GM12878 (cell line): ENCODE measurements at regions of chr14 and their contacts with region 1.

Region 1: GRCh38 chr14:95185033-95185766 is 27.9 kb upstream of the DICER1 start:
- DNase-seq: no peak
- ATAC-seq: no peak
- H3K4me3 ChIP-seq: no peak overlapping the region
- H3K27ac ChIP-seq: no peak overlapping the region
- H3K4me1 ChIP-seq: no peaks in the 10 kb centered on the region
- H3K27me3 ChIP-seq: no peaks in the 10 kb centered on the region
- CTCF ChIP-seq: no peak
- EP300 ChIP-seq: no peak
- POLR2A ChIP-seq: no peak
- RAD21 ChIP-seq: no peak

Region 2: GRCh38 chr14:95157327-95158189 is 27.6 kb before region 1 on chr14 and contains the start of gene DICER1:
- CTCF ChIA-PET with region 1: interaction called, 5 read pairs
- POLR2A ChIA-PET with region 1: interaction called, 5 read pairs
- RAD21 ChIA-PET with region 1: interaction called, 7 read pairs
- SMC1A ChIA-PET with region 1: interaction called, 16 read pairs
- in situ Hi-C with region 1: no loop called
- intact Hi-C with region 1: no loop called
- DNase-seq: peak; percentile 44
- ATAC-seq: peak; percentile 85
- H3K4me3 ChIP-seq: peak within 1 kb of the TSS; percentile 89
- H3K27ac ChIP-seq: peak within 1 kb of the TSS; percentile 95
- H3K4me1 ChIP-seq: peaks cover 8% of the 10 kb centered on the region; the same call in 1 of the 2 replicates
- H3K27me3 ChIP-seq: no peaks in the 10 kb centered on the region
- CTCF ChIP-seq: no peak
- EP300 ChIP-seq: no peak
- POLR2A ChIP-seq: peak; percentile 60
- RAD21 ChIP-seq: no peak
- polyA plus RNA-seq, gene DICER1: 6.8 to 9.8 TPM

Region 3: GRCh38 chr14:95196290-95196689 is 11.1 kb after region 1 on chr14:
- CTCF ChIA-PET with region 1: interaction called, 54 read pairs
- POLR2A ChIA-PET with region 1: interaction called, 7 read pairs
- RAD21 ChIA-PET with region 1: interaction called, 12 read pairs
- SMC1A ChIA-PET with region 1: interaction called, 15 read pairs
- in situ Hi-C with region 1: no loop called
- intact Hi-C with region 1: no loop called
- DNase-seq: no peak
- ATAC-seq: peak; percentile 88
- H3K4me3 ChIP-seq: no peak overlapping the region
- H3K27ac ChIP-seq: no peak overlapping the region
- H3K4me1 ChIP-seq: no peaks in the 10 kb centered on the region
- H3K27me3 ChIP-seq: no peaks in the 10 kb centered on the region
- CTCF ChIP-seq: peak; percentile 30 to 53 (median 52); a peak in 5 of 6 replicates
- EP300 ChIP-seq: no peak
- POLR2A ChIP-seq: no peak
- RAD21 ChIP-seq: peak; percentile 75

Region 4: DNA sequence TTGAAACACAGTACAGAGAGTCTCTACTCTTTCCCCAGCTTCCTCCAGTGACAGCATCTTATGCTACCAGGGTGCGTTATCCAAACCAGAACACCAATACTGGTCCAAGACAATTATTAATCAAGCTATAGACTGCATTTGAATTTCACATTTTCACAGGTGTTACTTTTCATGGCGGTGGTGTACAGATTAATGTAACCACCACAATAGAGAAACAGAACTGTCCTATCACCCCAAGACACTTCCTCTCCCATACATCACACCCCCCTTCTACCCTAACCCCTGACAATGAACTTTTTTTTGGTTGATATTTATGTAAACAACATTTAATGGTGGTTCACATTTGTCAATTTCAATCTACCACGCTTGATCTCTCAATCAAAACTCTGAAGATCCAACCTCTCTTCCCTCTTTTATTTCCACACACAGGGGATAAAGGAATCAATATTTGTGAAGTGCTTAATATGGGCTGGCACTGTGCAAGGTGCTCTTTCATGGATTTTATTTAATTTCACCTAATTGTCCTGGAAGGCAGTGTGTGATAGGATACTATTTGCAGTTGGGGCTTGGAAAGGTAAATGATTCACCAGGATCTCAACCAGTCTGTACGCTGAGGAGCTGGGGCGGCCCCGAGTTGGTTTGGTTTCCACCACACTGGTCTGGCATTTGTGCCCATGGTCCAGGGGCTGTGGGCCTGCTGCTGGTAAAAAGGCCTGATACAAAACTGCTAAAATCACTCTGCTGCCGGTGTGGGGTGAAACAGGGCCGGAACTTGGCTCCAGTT is 26.7 kb after region 1 on chr14:
- CTCF ChIA-PET with region 1: interaction called, 4 read pairs
- POLR2A ChIA-PET with region 1: interaction called, 3 read pairs
- RAD21 ChIA-PET with region 1: interaction called, 23 read pairs
- SMC1A ChIA-PET with region 1: interaction called, 20 read pairs
- in situ Hi-C with region 1: no loop called
- intact Hi-C with region 1: no loop called
- DNase-seq: peak; percentile 27
- ATAC-seq: peak; percentile 80
- H3K4me3 ChIP-seq: no peak overlapping the region
- H3K27ac ChIP-seq: no peak overlapping the region
- H3K4me1 ChIP-seq: peaks cover 30% of the 10 kb centered on the region
- H3K27me3 ChIP-seq: no peaks in the 10 kb centered on the region
- CTCF ChIP-seq: no peak
- EP300 ChIP-seq: peak; percentile 53 to 67; a peak in 3 of 4 replicates
- POLR2A ChIP-seq: no peak
- RAD21 ChIP-seq: no peak

Region 5: DNA sequence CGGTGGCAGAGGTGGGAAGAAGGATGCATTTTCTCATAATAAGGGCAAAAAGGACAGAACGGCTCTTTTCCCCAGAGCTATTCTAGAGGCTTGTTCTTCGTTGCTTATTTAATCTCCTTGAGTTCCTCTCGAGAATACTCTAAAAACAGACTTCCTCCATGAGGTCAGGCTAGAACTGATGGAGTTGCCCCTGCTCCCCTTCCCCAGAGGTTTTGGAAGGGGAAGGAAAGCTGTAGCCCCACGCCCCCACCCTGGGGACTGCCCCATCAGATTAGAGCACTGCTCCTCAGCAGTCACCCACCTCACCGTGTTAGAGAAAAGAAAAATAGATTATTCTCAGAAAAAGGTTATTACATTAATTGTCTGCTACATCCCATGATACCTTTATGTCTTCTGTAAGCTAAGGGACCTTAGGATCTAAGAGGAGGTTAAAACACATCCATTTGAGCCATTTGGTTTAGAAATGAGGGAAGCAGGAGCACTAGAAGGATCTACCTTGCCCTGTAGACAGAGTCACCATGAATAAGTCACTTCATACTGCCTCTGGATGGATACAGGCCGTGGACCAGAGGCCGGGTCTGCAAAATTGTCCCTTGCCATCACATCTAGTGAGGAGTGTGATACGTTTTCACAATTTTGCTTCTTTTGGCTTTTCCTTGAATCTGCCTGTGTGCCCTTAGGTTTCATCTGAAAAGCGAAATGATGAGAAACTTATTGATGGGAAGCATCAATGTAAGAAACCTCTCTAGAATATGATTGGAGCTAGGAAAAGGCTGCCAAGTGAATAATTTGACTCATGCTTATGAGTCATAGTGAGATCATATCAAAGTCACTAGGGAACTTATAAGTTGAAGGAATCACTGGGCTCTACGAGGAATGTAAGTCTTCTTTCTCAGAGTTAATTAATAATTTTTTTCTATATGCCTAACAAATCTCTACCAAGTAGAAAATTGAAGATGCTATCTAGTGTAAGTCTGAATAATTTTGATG is 360.3 kb after region 1 on chr14:
- CTCF ChIA-PET with region 1: no interaction called
- POLR2A ChIA-PET with region 1: no interaction called
- RAD21 ChIA-PET with region 1: no interaction called
- SMC1A ChIA-PET with region 1: no interaction called
- in situ Hi-C with region 1: no loop called
- intact Hi-C with region 1: no loop called
- DNase-seq: no peak
- ATAC-seq: no peak
- H3K4me3 ChIP-seq: no peak overlapping the region
- H3K27ac ChIP-seq: no peak overlapping the region
- H3K4me1 ChIP-seq: no peaks in the 10 kb centered on the region
- H3K27me3 ChIP-seq: no peaks in the 10 kb centered on the region
- CTCF ChIP-seq: no peak
- EP300 ChIP-seq: no peak
- POLR2A ChIP-seq: no peak
- RAD21 ChIP-seq: no peak